Head of caudate nucleus (tissue), 42 donors: ENCODE measurements at regions of chr20 and their contacts with region 1.

Region 1: DNA sequence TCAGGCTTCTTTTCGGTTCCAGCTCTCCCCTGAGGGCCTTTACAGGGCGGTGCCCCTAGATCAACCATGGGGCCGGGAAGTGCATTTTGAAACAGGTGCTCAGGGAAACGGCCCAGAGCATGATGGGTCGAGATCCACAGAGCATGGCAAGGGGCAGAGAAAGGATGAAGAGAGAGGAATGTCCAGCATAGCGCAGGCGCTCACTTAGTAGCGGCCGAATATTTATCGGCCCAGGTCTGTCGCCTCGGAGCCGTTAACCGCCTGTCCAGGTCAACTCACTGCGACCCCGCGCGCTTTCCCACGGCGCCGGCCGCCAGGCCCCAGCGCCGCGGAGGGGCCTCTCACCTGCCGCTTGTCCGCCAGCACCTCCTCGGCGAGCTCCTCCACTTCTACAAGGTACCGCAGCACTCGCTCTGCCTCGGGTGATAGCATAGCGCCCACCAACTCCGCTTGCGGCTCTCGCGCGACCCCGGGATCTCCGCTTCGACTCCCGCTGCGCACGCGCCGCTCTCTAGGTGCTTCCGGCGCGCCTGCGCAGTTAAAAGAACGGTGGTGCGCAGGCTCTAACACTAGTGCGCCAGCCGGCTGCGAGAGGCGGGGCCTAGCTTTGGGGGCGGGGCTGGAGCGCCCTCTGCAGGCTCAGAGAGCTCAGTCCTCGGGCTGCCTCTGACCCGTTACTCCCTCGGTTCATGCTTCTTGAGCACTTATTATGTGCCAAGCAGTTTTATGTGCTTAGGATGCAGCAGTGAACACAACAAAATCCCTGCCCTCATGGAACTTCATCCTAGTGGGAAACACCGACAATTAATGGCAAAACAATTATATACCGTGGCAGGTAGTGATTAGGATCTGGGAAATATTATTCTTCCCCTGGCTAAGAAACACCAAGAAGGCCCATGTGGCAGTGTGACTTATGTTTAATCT is at the start of gene PDRG1:
- DNase-seq: peak; percentile 69 to 96 (median 91)

Region 2: DNA sequence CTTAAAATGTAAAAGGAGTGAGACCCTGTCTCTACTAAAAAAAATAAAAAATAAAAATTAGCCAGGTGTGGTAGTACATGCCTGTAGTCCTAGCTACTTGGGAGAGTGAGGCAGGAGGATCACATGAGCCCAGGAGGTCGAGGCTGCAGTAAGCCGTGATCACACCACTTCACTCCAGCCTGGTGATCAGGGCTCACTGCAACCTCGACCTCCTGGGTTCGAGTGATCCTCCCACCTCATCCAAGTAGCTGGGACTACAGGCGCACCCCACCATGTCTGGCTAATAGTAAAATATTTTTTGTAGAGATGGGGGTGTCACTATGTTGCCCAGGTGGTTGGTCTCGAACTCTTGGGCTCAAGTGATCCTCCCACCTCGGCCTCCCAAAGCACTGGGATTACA is 98.3 kb before region 1 on chr20:
- intact Hi-C with region 1: loop called (anchors 2 kb)
- DNase-seq: no peak

Region 3: DNA sequence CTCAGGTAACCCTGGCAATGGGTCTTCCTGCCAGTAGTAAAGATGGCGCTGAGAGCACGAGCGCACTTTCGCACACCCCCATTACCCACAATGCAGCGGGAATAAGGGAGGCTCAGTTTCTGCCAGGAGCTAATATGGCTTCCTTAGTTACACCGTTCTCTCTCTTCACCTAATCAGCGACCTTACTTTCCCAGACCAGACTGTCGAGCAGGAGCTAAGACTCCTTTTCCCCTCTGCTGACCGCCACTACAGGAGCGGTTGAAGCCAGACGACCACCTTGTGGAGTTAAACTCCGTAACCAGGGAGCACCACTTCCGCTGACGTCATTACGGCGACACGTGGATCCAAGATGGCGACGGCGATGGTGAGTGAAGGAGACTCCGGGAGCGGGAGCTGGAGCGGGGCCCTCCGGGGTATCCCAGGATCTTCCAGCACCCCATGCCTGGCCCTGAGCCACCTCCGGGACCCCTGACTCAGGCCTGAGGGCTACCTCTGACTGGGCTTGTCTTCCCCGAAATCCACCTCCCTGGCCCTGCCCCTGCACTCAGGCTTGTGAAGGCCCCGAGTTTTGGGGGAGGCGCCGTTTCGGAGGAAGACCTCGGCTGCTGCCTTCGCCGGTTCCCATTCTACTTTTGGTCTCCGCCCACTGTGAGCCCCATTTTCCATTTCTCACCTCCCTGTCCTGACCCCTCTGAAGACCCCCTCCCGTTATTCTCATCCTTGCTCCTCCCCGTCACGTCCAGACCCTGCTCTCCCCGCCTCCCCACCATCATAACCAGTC is 157.8 kb after region 1 on chr20 and contains the start of gene TM9SF4:
- intact Hi-C with region 1: no loop called
- DNase-seq: peak; percentile 84 to 98 (median 93)